Cardiac septum (tissue), 1 donor: ENCODE measurements at regions of chr11 and their contacts with region 1.

Region 1: GRCh38 chr11:1262172-1263006 is 39.5 kb downstream of the MUC5B start:
- DNase-seq: peak; percentile 94

Region 2: GRCh38 chr11:1309498-1310317 is 47.3 kb after region 1 on chr11 and contains the start of gene TOLLIP:
- intact Hi-C with region 1: loop called (anchors 2 kb)
- DNase-seq: peak; percentile 99
- total RNA-seq, gene TOLLIP: 46.9 TPM